AG04450 (cell line): ENCODE measurements at regions of chr12 and their contacts with region 1.

Region 1: GRCh38 chr12:46357438-46358324 is 14.9 kb downstream of the SLC38A2 start:
- DNase-seq: peak; percentile 71
- H3K4me3 ChIP-seq: no peak overlapping the region
- H3K27ac ChIP-seq: peak overlapping the region; percentile 41
- H3K27me3 ChIP-seq: no peaks in the 10 kb centered on the region
- CTCF ChIP-seq: no peak

Region 2: GRCh38 chr12:46268590-46269558 is 88.8 kb before region 1 on chr12 and contains the start of gene SLC38A1:
- CTCF ChIA-PET with region 1: no interaction called
- POLR2A ChIA-PET with region 1: interaction called, 10 read pairs
- DNase-seq: no peak
- H3K4me3 ChIP-seq: peak within 1 kb of the TSS; percentile 87
- H3K27ac ChIP-seq: peak within 1 kb of the TSS; percentile 91
- H3K27me3 ChIP-seq: no peaks in the 10 kb centered on the region
- CTCF ChIP-seq: no peak
- polyA plus RNA-seq, gene SLC38A1: 96.9 and 136 TPM in 2 replicates